Activated CD4-positive, alpha-beta memory T cell treated with anti-CD3 and anti-CD28 coated beads, Interleukin-2, amount 10 ng/mL, durations not matched to agents 7 days and 5 days (primary cell): ENCODE measurements at regions of chr15 and their contacts with region 1.

Region 1: GRCh38 chr15:25438601-25439368 is at the start of gene UBE3A:
- DNase-seq: peak; percentile 90
- H3K4me3 Mint-ChIP-seq: peak within 1 kb of the TSS; percentile 89
- H3K27ac Mint-ChIP-seq: peak within 1 kb of the TSS; percentile 82
- H3K4me1 Mint-ChIP-seq: peaks cover 35% of the 10 kb centered on the region
- H3K27me3 Mint-ChIP-seq: no peaks in the 10 kb centered on the region
- total RNA-seq, gene UBE3A: 74.9 to 82.2 TPM

Region 2: DNA sequence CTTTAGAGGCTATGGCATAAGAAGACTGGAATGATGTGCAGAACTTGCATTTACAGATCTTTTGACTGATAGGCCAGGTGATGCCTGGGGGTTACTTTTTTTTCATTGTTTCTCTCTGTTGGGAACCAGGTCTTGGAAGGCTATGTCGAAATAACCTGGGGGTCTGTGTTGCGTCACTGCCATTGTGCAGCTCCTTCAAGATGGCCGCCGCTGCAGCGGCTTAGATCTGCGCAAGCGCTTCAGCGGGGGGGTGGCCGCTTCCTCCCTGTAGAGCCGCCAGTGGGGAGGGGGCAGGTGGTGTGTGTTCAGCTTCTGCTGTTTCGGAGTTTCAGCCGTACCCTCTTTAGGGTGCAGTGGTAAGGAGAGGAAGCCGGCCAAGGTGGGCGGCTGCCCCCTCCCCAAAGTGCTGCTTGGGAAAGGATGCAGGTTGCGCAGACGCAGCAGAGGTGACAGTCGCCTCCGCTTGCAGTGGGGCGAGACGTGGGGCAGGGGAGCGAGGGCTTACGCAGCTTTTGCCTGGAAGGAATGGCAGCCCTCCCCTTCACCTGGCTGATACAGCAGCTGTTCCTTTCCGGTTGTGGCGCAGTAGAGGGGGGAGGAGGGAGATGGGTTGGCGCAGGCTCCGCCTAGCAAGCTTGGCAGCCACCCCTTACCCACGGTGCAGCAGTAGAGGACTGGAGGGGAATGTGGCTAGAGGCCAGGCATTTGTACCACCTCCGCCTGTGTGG is 482.5 kb before region 1 on chr15:
- CTCF ChIA-PET with region 1: no interaction called
- POLR2A ChIA-PET with region 1: interaction called, 10 read pairs
- DNase-seq: peak; percentile 62
- H3K4me3 Mint-ChIP-seq: peak overlapping the region; percentile 84
- H3K27ac Mint-ChIP-seq: peak overlapping the region; percentile 84
- H3K4me1 Mint-ChIP-seq: peaks cover 20% of the 10 kb centered on the region
- H3K27me3 Mint-ChIP-seq: peaks cover 1% of the 10 kb centered on the region